SK-N-SH (cell line): ENCODE measurements at regions of chr15 and their contacts with region 1.

Region 1: DNA sequence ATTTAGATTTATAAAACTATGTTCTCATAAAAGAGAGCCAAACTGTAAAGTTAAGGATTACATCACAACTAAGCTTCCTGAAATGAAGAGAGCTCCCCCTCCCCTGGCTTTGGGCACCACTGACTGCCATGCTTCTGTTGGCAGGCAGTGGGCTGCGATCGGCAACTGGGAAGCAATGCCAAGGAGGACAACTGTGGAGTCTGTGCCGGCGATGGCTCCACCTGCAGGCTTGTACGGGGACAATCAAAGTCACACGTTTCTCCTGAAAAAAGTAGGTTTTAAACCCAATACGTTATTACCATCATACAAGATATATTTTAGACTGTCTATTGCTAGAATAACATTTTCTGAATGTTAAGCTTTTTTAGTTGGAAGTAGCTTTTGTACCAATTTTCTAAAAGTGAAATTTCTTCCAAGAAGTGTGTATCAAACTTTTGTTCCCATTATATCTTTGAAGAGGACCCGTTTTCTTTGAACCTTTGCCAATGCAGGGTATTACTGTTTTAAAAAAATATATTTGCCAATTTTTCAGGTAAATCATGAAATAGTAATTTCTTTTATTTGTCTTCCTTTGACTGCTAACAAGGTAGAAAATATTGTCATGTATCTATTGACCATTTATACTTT is 184.1 kb downstream of the ADAMTSL3 start:
- DNase-seq: peak; percentile 55
- H3K4me3 ChIP-seq: no peak overlapping the region; a peak in 1 of 4 replicates
- H3K27ac ChIP-seq: no peak overlapping the region
- H3K4me1 ChIP-seq: no peaks in the 10 kb centered on the region
- H3K27me3 ChIP-seq: no peaks in the 10 kb centered on the region
- CTCF ChIP-seq: peak; percentile 59
- EP300 ChIP-seq: no peak
- RAD21 ChIP-seq: peak; percentile 56

Region 2: DNA sequence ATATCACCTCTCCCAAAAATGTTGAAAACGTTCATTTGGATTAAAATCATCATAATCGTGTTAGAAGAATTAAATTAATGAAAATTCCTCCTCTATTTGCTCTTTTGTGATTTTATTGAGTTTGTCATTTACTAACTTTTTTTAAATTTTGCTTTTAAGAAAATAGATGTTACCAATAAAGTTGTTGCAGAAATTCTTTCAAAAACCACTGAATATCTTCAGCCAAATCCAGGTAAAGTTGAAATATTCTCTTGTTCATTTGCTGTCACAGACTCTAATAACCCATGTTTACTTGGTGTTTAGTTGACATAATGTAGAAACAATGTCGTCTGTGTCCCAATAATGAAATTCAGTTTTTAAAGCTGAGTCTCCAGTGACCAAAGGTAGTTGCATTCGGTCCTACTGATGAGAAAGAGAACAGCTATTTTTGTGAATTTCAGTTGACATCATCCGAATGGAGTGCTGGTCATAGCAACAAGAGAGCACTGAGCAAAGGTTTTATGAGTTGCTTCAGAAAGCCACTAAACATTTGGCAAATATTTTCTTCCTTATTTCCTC is 273.0 kb before region 1 on chr15:
- CTCF ChIA-PET with region 1: interaction called, 19 read pairs
- POLR2A ChIA-PET with region 1: no interaction called
- DNase-seq: no peak
- H3K4me3 ChIP-seq: no peak overlapping the region
- H3K27ac ChIP-seq: no peak overlapping the region
- H3K4me1 ChIP-seq: no peaks in the 10 kb centered on the region
- H3K27me3 ChIP-seq: no peaks in the 10 kb centered on the region
- CTCF ChIP-seq: no peak
- EP300 ChIP-seq: no peak
- RAD21 ChIP-seq: no peak